CD4-positive, alpha-beta T cell (primary cell): ENCODE measurements at regions of chr15 and their contacts with region 1.

Region 1: DNA sequence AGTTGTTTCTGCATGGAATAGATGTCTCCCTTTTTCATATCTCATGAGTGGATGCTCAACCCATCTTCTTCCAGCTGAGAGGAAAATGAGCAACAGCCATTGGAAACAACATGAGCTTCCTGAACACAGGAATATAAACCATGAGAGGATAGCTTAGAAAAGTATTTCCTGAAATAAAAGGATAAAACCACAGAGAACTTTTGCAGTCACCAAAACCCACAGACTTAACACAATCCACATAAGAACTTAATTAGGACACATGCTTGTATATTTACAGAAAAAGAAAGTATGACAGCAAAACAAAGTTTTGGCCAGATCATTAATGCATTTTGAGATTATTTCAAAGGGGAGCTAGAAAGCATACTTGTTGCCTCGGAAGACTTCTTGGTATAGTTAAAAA is 180.5 kb upstream of the RASGRP1 start:
- DNase-seq: no peak
- ATAC-seq: no peak
- H3K4me3 ChIP-seq: no peak overlapping the region
- H3K4me3 Mint-ChIP-seq: no peak overlapping the region
- H3K27ac ChIP-seq: no peak overlapping the region
- H3K27ac Mint-ChIP-seq: no peak overlapping the region
- H3K4me1 ChIP-seq: no peaks in the 10 kb centered on the region
- H3K4me1 Mint-ChIP-seq: no peaks in the 10 kb centered on the region
- H3K27me3 ChIP-seq: no peaks in the 10 kb centered on the region
- H3K27me3 Mint-ChIP-seq: peaks cover 11% of the 10 kb centered on the region
- CTCF ChIP-seq: no peak

Region 2: DNA sequence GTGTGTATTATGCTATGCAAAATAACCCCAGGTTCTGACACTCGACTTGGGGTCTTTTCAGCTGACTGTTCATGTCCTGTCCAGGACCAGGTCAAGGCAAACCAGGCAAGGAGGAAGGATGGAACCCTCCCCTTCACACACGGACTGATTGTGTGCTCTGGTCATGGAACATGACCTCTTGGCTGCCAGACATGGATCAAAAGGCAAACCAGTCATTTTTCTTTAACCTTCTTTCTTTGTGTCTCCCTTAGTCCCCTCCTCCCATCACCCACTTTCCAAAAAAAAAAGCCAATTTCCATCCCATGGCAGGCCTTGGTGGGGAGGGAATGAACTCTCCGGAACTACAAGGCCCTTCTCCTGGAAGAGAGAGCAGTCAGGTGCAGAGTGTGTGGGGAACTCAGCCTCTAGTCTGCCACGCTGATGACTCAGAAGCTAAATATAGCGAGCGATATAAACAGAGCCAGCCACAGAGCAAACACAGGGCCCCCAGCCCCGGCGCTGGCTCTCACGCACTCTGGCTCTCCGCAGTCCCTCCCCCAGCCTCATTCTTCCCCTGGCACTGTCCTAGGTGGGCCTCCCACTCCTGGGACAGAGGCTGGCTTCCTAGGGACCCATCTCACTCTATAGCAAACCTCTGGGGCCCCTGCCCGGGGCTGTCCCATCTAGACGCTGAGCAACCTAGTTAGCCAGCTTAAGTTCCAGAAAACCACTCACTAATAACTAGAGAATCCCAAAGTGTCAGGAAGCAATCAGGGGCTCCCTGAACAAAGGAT is 1353.5 kb after region 1 on chr15:
- CTCF ChIA-PET with region 1: no interaction called
- POLR2A ChIA-PET with region 1: no interaction called
- intact Hi-C with region 1: loop called in 1 of 2 experiments (anchors 10 kb)
- DNase-seq: peak in 13 of 14 experiments; percentile 30 to 80 (median 58)
- ATAC-seq: peak; percentile 97
- H3K4me3 ChIP-seq: no peak overlapping the region
- H3K4me3 Mint-ChIP-seq: peak overlapping the region; percentile 60
- H3K27ac ChIP-seq: peak overlapping the region; percentile 51 to 59
- H3K27ac Mint-ChIP-seq: peak overlapping the region; percentile 90
- H3K4me1 ChIP-seq: peaks cover 48% of the 10 kb centered on the region
- H3K4me1 Mint-ChIP-seq: peaks cover 54% of the 10 kb centered on the region
- H3K27me3 ChIP-seq: no peaks in the 10 kb centered on the region
- H3K27me3 Mint-ChIP-seq: no peaks in the 10 kb centered on the region
- CTCF ChIP-seq: no peak